ENCODE measurements at regions of chr15 and their contacts with region 1.

Region 1: DNA sequence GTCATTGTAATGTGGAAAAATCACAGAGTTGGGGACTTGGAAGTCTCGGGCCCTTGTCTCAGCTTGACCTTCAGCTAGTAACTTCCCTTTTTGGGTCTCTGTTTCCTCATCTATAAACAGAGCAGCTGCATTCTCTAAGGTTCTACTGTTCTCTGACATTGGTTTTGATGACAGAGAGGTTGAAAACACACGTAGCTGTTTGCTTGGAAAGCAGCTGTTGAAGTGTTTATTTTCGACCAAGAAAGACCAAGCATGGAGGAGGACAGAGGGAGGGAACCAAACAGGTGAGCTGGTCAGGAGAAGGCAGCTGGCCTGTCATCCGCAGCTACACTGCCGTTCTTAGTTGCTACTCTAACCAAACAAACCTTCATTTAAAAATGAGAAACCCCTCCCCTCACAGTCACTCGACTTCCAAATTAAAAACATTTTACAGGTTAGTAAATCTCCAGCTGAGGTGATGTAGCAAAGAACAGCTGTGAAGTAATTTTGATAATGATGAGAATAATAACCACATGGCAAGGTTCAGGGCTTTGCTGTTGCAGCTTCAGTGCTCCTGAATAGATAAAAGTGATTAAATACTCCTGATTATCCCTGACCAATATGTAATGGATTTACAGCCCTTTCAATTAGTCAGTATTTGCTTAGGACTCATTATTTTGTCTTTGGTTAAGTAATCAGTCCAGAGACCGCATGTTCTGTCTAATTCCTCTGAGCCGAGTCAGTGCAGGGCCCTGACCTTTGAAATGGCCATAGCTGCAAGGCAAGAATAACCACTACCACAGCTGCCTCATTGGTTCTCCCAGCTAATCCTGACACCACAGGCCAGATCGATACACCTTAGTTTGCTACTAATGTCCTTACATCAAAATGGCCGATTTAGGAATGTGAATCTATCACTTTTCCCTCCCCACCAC is 65.3 kb downstream of the MEIS2 start:
- DNase-seq: no peak
- ATAC-seq: peak; percentile 69
- H3K4me3 ChIP-seq: no peak overlapping the region
- H3K27ac ChIP-seq: peak overlapping the region; percentile 21
- H3K4me1 ChIP-seq: peaks cover 11% of the 10 kb centered on the region; the same call in 1 of the 2 replicates
- H3K27me3 ChIP-seq: no peaks in the 10 kb centered on the region
- CTCF ChIP-seq: no peak
- EP300 ChIP-seq: no peak
- POLR2A ChIP-seq: no peak
- RAD21 ChIP-seq: no peak

Region 2: DNA sequence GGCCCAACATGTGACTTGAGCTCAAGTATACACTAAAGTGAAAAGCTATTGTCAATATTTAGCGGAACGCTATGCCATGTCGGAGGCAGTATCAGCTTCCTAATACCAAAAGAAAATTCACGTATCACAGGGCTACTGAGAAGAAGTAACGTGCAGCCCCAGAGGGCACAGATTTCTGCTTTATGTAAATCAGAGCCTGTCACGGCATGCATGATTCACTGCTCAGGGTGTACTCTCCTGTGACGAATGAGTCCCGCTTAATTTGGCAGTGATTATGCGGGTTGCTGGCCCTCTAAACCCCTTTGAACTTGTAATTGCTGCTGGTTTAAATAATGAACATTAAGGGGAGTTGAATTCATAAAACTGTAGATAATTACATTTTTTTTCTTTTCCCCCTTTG is 20.1 kb before region 1 on chr15:
- CTCF ChIA-PET with region 1: interaction called, 3 read pairs
- POLR2A ChIA-PET with region 1: interaction called, 11 read pairs
- RAD21 ChIA-PET with region 1: interaction called, 13 read pairs
- SMC1A ChIA-PET with region 1: interaction called, 15 read pairs
- in situ Hi-C with region 1: no loop called
- intact Hi-C with region 1: no loop called
- DNase-seq: no peak
- ATAC-seq: peak; percentile 84
- H3K4me3 ChIP-seq: no peak overlapping the region
- H3K27ac ChIP-seq: no peak overlapping the region
- H3K4me1 ChIP-seq: peaks cover 17% of the 10 kb centered on the region
- H3K27me3 ChIP-seq: no peaks in the 10 kb centered on the region
- CTCF ChIP-seq: no peak
- EP300 ChIP-seq: peak; percentile 63 to 71; a peak in 2 of 4 replicates
- POLR2A ChIP-seq: no peak
- RAD21 ChIP-seq: no peak

Region 3: GRCh38 chr15:37045859-37046740 is 11.0 kb after region 1 on chr15:
- CTCF ChIA-PET with region 1: interaction called, 3 read pairs
- POLR2A ChIA-PET with region 1: interaction called, 4 read pairs
- RAD21 ChIA-PET with region 1: interaction called, 7 read pairs
- SMC1A ChIA-PET with region 1: interaction called, 45 read pairs
- in situ Hi-C with region 1: no loop called
- intact Hi-C with region 1: no loop called
- DNase-seq: no peak
- ATAC-seq: no peak; the same call in 2 of the 3 replicates
- H3K4me3 ChIP-seq: no peak overlapping the region
- H3K27ac ChIP-seq: no peak overlapping the region
- H3K4me1 ChIP-seq: no peaks in the 10 kb centered on the region
- H3K27me3 ChIP-seq: no peaks in the 10 kb centered on the region
- CTCF ChIP-seq: no peak
- EP300 ChIP-seq: no peak
- POLR2A ChIP-seq: no peak
- RAD21 ChIP-seq: no peak